ENCODE measurements at regions of chr3 and their contacts with region 1.

Region 1: GRCh38 chr3:37054370-37054769 is 61.1 kb downstream of the MLH1 start:
- H3K4me3 Mint-ChIP-seq: no peak overlapping the region
- H3K27ac Mint-ChIP-seq: no peak overlapping the region
- H3K4me1 Mint-ChIP-seq: peaks cover 5% of the 10 kb centered on the region
- H3K27me3 Mint-ChIP-seq: no peaks in the 10 kb centered on the region

Region 2: GRCh38 chr3:37014620-37015019 is 39.8 kb before region 1 on chr3:
- intact Hi-C with region 1: loop called (anchors 10 kb)
- H3K4me3 Mint-ChIP-seq: no peak overlapping the region
- H3K27ac Mint-ChIP-seq: no peak overlapping the region
- H3K4me1 Mint-ChIP-seq: no peaks in the 10 kb centered on the region
- H3K27me3 Mint-ChIP-seq: no peaks in the 10 kb centered on the region

Measured in dendritic cell treated with granulocyte-macrophage colony-stimulating factor and Interleukin-4, amounts not matched to agents 40 ng/mL and 50 ng/mL, for 4 days (primary cell).